B cell (primary cell): ENCODE measurements at regions of chr12 and their contacts with region 1.

Region 1: DNA sequence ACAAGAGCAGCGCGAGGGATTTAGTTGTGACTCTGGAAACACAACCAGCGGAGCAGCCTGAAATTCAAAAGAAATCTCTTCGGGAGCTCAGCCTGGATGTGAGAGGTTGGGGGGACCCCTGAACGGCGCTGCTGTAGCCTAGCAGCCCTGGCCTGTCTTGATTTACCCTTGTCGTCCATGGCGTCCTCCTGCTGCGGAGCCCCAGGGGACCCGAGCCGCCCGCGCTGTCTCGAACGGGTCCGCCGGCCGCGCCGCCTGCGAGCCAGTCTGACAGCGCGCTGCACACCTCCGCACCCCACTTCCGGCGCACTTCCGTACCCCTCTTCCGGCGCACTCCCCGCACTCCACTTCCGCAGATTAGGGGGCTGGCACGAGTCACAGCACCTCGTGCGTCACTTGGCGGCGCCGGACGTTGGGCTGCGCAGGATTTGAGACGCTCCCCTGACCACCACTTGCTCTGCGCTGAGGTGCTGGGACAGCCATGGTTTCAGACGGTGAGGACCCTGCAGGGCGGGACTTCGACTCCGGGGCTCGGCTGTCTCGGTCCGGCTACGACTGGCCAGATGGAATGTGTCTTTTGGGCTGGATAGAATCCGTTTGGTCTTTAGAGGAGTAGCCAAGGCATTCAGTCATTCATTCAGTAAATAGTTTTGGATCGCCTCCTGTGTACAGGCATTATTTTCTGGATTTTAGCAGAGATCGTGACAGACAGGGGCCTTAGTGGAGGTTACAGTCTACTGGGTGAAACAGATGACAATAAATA is at the starts of genes EIF2B1 and GTF2H3:
- DNase-seq: peak; percentile 97
- ATAC-seq: peak; percentile 98
- H3K4me3 ChIP-seq: peak within 1 kb of the TSS; percentile 64 to 98 (median 92)
- H3K4me3 Mint-ChIP-seq: peak within 1 kb of the TSS; percentile 96
- H3K27ac ChIP-seq: peak within 1 kb of the TSS; percentile 75 to 88
- H3K27ac Mint-ChIP-seq: peak within 1 kb of the TSS; percentile 95
- H3K4me1 ChIP-seq: peaks cover 13 to 14% of the 10 kb centered on the region in 2 donors
- H3K4me1 Mint-ChIP-seq: peaks cover 25% of the 10 kb centered on the region
- H3K27me3 ChIP-seq: no peaks in the 10 kb centered on the region
- H3K27me3 Mint-ChIP-seq: no peaks in the 10 kb centered on the region
- CTCF ChIP-seq: no peak
- total RNA-seq, gene EIF2B1: 54.0 and 56.7 TPM in 2 replicates
- total RNA-seq, gene GTF2H3: 24.2 and 25.8 TPM in 2 replicates

Region 2: DNA sequence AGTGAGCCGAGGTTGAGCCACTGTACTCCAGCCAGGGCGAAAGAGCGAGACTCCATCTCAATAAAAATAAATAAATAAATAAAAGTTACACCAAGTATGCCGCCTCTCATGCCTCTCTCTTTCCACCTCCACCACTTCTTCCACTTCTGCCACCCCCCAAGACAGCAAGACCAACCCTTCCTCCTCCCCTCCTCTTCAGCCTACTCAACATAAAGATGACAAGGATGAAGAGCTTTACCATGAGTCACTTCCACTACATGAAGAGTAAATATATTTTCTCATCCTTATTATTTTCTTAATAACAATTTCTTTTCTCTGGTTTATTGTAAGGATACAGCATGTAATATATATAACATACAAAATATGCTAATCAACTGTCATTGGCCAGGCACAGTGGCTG is 52.8 kb before region 1 on chr12:
- CTCF ChIA-PET with region 1: interaction called, 5 read pairs
- POLR2A ChIA-PET with region 1: interaction called, 4 read pairs
- intact Hi-C with region 1: loop called (anchors 1 kb)
- DNase-seq: no peak
- ATAC-seq: no peak
- H3K4me3 ChIP-seq: no peak overlapping the region
- H3K4me3 Mint-ChIP-seq: no peak overlapping the region
- H3K27ac ChIP-seq: no peak overlapping the region
- H3K27ac Mint-ChIP-seq: no peak overlapping the region
- H3K4me1 ChIP-seq: peaks cover 21 to 27% of the 10 kb centered on the region in 2 donors
- H3K4me1 Mint-ChIP-seq: peaks cover 23% of the 10 kb centered on the region
- H3K27me3 ChIP-seq: no peaks in the 10 kb centered on the region
- H3K27me3 Mint-ChIP-seq: no peaks in the 10 kb centered on the region
- CTCF ChIP-seq: no peak

Region 3: GRCh38 chr12:123601602-123602489 is 31.7 kb before region 1 on chr12 and contains the start of gene DDX55:
- CTCF ChIA-PET with region 1: no interaction called
- POLR2A ChIA-PET with region 1: no interaction called
- intact Hi-C with region 1: loop called (anchors 1 kb)
- DNase-seq: peak; percentile 93
- ATAC-seq: peak; percentile 89
- H3K4me3 ChIP-seq: peak within 1 kb of the TSS; percentile 62 to 99 (median 93)
- H3K4me3 Mint-ChIP-seq: peak within 1 kb of the TSS; percentile 99
- H3K27ac ChIP-seq: peak within 1 kb of the TSS; percentile 74 to 85
- H3K27ac Mint-ChIP-seq: peak within 1 kb of the TSS; percentile 97
- H3K4me1 ChIP-seq: peaks cover 12 to 23% of the 10 kb centered on the region in 2 donors
- H3K4me1 Mint-ChIP-seq: peaks cover 23% of the 10 kb centered on the region
- H3K27me3 ChIP-seq: no peaks in the 10 kb centered on the region
- H3K27me3 Mint-ChIP-seq: no peaks in the 10 kb centered on the region
- CTCF ChIP-seq: peak; percentile 40
- total RNA-seq, gene DDX55: 33.3 and 35.6 TPM in 2 replicates

Region 4: DNA sequence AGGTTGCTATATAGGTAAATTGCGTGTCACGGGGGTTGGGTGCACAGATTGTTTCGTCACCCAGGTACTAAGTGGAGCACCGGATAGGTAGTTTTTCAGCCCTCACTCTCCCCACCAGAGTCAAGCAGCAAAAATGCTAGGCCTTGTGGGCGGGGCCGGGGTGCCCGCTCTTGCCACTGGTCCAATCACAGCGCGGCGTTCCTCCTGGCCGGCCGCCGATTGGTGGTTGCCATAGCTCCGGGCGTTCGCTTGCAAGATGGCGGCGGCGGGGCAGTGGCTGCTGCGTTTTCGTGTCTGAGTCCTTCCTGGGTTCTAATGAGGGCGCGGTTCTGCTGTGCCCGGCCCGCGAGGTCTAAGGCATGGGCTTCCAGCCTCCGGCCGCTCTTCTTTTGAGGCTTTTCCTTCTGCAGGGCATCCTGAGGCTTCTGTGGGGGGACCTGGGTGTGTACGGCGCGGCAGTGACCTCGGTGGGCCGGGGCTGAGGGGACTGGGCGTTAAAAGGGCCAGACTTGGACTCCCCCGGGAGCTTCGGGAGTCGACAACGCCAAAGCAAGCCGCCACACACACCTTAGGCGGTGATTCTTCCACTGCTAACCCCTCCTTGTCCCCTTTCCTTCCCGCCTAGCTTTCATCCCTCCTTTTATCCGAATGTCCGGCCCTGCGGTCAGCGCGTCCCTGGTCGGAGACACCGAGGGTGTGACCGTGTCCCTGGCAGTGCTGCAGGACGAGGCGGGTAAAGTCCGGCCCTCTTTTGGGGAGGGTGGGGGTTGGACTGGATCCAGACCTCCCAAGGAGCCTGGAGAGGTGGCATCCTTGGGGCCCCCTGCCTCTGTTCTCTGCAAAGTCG is 37.5 kb after region 1 on chr12 and contains the start of gene TCTN2:
- CTCF ChIA-PET with region 1: no interaction called
- POLR2A ChIA-PET with region 1: no interaction called
- intact Hi-C with region 1: loop called (anchors 1 kb)
- DNase-seq: peak; percentile 92
- ATAC-seq: peak; percentile 100
- H3K4me3 ChIP-seq: peak within 1 kb of the TSS; percentile 45 to 83 (median 80)
- H3K4me3 Mint-ChIP-seq: peak within 1 kb of the TSS; percentile 89
- H3K27ac ChIP-seq: peak within 1 kb of the TSS in 1 of 2 donors; percentile 62
- H3K27ac Mint-ChIP-seq: peak within 1 kb of the TSS; percentile 63
- H3K4me1 ChIP-seq: peaks cover 9 to 14% of the 10 kb centered on the region in 2 donors
- H3K4me1 Mint-ChIP-seq: peaks cover 14% of the 10 kb centered on the region
- H3K27me3 ChIP-seq: no peaks in the 10 kb centered on the region
- H3K27me3 Mint-ChIP-seq: no peaks in the 10 kb centered on the region
- CTCF ChIP-seq: no peak
- total RNA-seq, gene TCTN2: 21.9 and 22.8 TPM in 2 replicates

Region 5: GRCh38 chr12:123713398-123713797 is 79.8 kb after region 1 on chr12:
- CTCF ChIA-PET with region 1: no interaction called
- POLR2A ChIA-PET with region 1: no interaction called
- intact Hi-C with region 1: loop called (anchors 2 kb)
- DNase-seq: peak; percentile 33
- ATAC-seq: no peak
- H3K4me3 ChIP-seq: peak overlapping the region in 4 of 5 experiments; percentile 60 to 83 (median 79)
- H3K4me3 Mint-ChIP-seq: peak overlapping the region; percentile 86
- H3K27ac ChIP-seq: peak overlapping the region in 1 of 2 donors; percentile 58
- H3K27ac Mint-ChIP-seq: peak overlapping the region; percentile 88
- H3K4me1 ChIP-seq: peaks cover 23 to 24% of the 10 kb centered on the region in 2 donors
- H3K4me1 Mint-ChIP-seq: peaks cover 35% of the 10 kb centered on the region
- H3K27me3 ChIP-seq: no peaks in the 10 kb centered on the region
- H3K27me3 Mint-ChIP-seq: no peaks in the 10 kb centered on the region
- CTCF ChIP-seq: no peak

Region 6: GRCh38 chr12:123761841-123762714 is 128.5 kb after region 1 on chr12 and contains the start of gene DNAH10:
- CTCF ChIA-PET with region 1: no interaction called
- POLR2A ChIA-PET with region 1: no interaction called
- intact Hi-C with region 1: loop called (anchors 1 kb)
- DNase-seq: peak; percentile 72
- ATAC-seq: peak; percentile 79
- H3K4me3 ChIP-seq: peak within 1 kb of the TSS; percentile 26 to 73 (median 63)
- H3K4me3 Mint-ChIP-seq: peak within 1 kb of the TSS; percentile 94
- H3K27ac ChIP-seq: no peak within 1 kb of the TSS
- H3K27ac Mint-ChIP-seq: peak within 1 kb of the TSS; percentile 81
- H3K4me1 ChIP-seq: peaks cover 9 to 12% of the 10 kb centered on the region in 2 donors
- H3K4me1 Mint-ChIP-seq: peaks cover 9% of the 10 kb centered on the region
- H3K27me3 ChIP-seq: no peaks in the 10 kb centered on the region
- H3K27me3 Mint-ChIP-seq: no peaks in the 10 kb centered on the region
- CTCF ChIP-seq: peak; percentile 66
- total RNA-seq, gene DNAH10: 0.66 and 0.99 TPM in 2 replicates

Region 7: GRCh38 chr12:123948796-123949769 is 315.5 kb after region 1 on chr12:
- CTCF ChIA-PET with region 1: no interaction called
- POLR2A ChIA-PET with region 1: no interaction called
- intact Hi-C with region 1: no loop called
- DNase-seq: no peak
- ATAC-seq: no peak
- H3K4me3 ChIP-seq: no peak overlapping the region
- H3K4me3 Mint-ChIP-seq: no peak overlapping the region
- H3K27ac ChIP-seq: no peak overlapping the region
- H3K27ac Mint-ChIP-seq: no peak overlapping the region
- H3K4me1 ChIP-seq: no peaks in the 10 kb centered on the region
- H3K4me1 Mint-ChIP-seq: no peaks in the 10 kb centered on the region
- H3K27me3 ChIP-seq: no peaks in the 10 kb centered on the region
- H3K27me3 Mint-ChIP-seq: no peaks in the 10 kb centered on the region
- CTCF ChIP-seq: no peak